ENCODE measurements at regions of chr3 and their contacts with region 1.

Region 1: DNA sequence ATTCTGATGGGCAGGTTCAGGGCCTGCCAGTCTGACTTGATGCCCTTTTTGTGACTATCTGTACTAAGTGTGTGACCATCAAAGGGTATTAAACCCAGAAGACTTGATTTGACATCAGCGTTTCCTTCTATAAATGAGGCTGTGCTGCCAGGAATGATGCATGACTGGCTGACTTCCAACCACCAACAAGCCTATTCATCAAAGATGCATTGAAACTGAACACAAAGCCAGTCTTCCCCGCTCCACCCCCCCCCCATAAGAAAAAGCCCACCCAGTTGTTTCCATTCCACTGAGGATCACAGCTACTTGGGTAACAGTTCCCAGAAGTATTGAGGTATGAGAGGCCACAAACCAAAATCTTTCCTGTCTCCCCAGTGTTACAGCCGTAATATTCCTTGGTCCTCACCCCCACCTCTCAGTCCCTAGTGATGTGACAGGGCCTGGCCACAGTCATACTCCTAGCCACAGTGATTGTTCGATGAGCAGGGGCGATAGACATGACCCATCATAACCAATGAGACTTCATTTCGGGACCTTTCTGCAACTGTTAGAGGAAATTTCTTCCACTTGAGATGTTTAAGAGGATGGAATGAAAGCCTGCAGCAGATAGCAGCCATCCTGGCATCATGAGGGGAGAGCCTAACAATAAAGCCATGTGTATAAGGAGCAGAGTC is 22.6 kb downstream of the SH3BP5 start:
- DNase-seq: no peak
- H3K4me3 Mint-ChIP-seq: peak overlapping the region; percentile 66
- H3K27ac Mint-ChIP-seq: peak overlapping the region; percentile 94
- H3K4me1 Mint-ChIP-seq: peaks cover 66% of the 10 kb centered on the region
- H3K27me3 Mint-ChIP-seq: no peaks in the 10 kb centered on the region

Region 2: DNA sequence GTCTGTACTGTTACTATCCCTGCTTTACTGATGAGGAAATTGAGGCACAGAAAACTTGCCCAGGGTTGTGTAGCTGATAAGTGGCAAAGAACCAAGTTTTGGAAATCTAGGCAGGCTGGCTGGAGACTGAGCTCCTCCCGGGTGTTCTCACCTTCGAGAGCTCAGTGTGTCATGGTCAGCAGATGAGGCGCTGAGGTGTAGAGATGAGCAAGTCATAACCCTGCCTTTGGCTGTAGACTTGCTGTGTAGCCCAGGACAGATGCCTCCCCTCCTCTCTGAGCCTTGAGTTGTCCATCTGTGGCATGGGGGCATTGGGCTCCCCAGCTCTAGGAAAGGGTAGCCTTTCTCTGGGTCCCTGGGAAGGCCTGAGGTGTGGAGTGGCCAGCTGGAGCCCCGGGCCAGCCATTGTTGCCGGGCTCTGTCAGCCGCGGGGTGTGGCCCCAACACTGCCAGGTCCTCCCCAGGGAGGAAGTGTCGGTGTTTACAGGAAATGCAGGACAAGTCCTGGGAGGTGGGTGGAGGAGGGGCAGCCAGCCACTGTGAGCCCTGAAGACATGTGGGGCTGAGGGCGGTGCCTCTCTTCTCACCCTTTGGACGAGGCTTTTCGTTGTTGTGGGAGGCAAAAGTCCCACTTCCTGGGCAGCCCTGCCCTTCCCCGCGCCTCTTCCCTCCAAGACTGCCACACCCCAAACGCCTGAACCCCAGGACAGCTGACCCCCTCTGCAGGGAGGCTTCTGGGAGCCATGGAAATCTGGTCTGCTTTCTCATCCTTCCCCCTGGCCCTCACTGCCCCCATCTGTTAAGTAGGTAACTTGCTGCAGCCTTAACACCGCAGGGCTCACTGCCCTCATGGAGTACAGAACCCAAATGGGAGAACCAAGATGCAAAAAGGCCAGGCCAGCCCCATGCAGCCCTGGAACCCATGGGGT is 461.9 kb before region 1 on chr3:
- intact Hi-C with region 1: no loop called
- DNase-seq: peak; percentile 4
- H3K4me3 Mint-ChIP-seq: no peak overlapping the region
- H3K27ac Mint-ChIP-seq: no peak overlapping the region
- H3K4me1 Mint-ChIP-seq: peaks cover 33% of the 10 kb centered on the region
- H3K27me3 Mint-ChIP-seq: no peaks in the 10 kb centered on the region

Region 3: DNA sequence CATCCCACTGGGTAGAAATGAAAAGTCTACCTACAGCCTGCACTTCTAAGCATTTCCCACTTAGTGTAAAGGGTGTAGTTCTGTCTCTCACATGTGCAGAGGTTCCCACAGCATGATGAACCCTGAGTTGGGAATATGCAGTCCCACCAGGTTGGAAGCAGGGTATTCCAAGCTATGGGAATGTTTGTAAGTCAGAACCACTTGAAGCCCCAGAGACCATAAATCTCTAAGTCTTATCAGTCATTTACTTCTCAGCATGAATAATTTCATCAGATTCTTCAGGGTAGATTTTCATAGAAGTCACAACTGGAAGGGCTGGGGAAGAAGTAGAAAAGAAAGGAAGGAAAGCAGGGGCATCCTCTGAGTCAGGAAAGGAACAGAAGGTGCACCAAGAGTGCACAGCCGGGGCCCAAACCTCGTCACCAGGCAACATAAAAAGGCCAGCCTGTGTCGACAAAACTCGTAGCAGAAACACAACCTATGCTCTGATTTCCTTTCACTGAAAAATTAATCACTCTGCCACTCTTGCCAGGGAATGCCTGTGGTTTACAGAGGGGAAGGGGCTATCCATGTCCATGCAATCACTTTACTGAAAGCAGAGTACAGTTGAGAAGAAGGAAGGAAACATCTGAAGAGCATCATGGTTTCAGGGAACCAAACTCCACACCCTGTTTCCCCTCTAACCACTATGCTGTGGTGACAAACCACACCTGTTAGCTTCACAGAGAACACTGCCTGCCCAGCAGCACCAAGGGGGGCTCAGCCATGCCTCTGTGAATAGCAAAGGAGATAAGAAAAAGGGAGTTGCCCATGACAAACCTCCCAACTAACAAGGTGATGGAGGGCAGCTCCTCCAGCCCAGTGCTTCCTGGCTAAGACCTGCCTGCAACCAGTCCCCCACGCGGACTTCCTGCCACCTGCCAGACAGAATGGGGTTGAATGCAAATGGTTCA is 17.9 kb before region 1 on chr3:
- intact Hi-C with region 1: loop called (anchors 1 kb)
- DNase-seq: peak; percentile 74
- H3K4me3 Mint-ChIP-seq: peak overlapping the region; percentile 63
- H3K27ac Mint-ChIP-seq: peak overlapping the region; percentile 78
- H3K4me1 Mint-ChIP-seq: peaks cover 89% of the 10 kb centered on the region
- H3K27me3 Mint-ChIP-seq: no peaks in the 10 kb centered on the region

Region 4: DNA sequence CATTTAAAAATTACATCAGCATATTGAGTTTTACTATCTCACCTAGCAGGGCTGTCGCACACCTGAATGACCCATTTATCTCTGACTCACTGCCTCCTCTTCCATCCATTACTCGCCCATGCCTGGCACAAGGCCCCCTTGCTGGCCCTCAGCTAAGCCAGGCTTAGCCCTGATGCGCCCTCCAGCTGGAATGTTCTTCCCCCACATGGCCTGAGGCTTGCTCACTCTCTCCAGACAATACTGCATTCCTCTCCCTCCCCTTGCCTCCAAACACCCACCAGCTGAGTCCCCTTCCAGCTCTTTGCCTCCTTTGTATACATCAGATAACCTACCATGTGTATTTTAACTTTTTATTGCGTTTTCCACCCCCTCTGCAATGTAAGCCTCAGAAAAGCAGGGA is 15.4 kb after region 1 on chr3:
- intact Hi-C with region 1: loop called (anchors 1 kb)
- DNase-seq: no peak
- H3K4me3 Mint-ChIP-seq: no peak overlapping the region
- H3K27ac Mint-ChIP-seq: no peak overlapping the region
- H3K4me1 Mint-ChIP-seq: peaks cover 80% of the 10 kb centered on the region
- H3K27me3 Mint-ChIP-seq: no peaks in the 10 kb centered on the region

Region 5: DNA sequence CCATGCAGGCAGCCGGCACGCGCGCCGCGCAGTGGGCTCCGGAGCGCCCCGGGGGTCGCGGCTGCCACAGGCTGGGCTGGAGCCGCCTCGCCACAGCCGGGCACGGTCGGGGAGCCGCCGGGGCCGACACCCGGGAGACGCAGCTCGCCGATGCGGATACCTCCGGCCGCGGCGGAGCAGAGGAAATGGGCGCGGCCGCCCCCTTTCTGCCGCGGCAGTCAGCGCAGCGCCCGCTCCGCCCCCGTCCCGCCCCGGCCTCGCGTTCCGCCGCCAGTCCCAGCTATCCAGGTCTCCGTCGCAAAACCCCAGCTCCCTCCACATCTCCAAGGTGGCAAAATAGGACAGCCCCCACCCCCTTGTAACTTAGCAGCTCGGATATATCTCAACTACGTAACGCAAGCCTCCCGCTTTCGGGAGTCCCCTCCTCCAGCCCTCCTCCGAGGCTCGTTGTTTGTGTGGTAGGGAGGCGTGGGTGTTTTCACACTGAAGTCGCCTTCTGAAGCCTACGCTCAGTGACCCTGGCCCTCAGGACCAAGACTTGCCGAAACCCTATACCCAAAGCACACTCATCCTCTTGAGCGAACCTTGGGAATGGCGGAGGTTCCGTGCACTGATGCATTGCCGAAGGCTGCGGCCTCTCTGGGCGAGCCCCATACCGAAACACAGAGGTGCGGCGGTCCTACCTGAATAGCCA is 22.8 kb after region 1 on chr3 and contains the start of gene SH3BP5:
- intact Hi-C with region 1: loop called (anchors 1 kb)
- DNase-seq: peak; percentile 73
- H3K4me3 Mint-ChIP-seq: peak within 1 kb of the TSS; percentile 94
- H3K27ac Mint-ChIP-seq: peak within 1 kb of the TSS; percentile 89
- H3K4me1 Mint-ChIP-seq: peaks cover 72% of the 10 kb centered on the region
- H3K27me3 Mint-ChIP-seq: no peaks in the 10 kb centered on the region
- total RNA-seq, gene SH3BP5: 28.0 and 30.3 TPM in 2 replicates

Region 6: GRCh38 chr3:15356186-15356585 is 46.4 kb after region 1 on chr3:
- intact Hi-C with region 1: loop called (anchors 1 kb)
- DNase-seq: no peak
- H3K4me3 Mint-ChIP-seq: no peak overlapping the region
- H3K27ac Mint-ChIP-seq: peak overlapping the region; percentile 93
- H3K4me1 Mint-ChIP-seq: peaks cover 43% of the 10 kb centered on the region
- H3K27me3 Mint-ChIP-seq: no peaks in the 10 kb centered on the region

Region 7: GRCh38 chr3:15409239-15410168 is 99.7 kb after region 1 on chr3:
- intact Hi-C with region 1: no loop called
- DNase-seq: no peak
- H3K4me3 Mint-ChIP-seq: no peak overlapping the region
- H3K27ac Mint-ChIP-seq: no peak overlapping the region
- H3K4me1 Mint-ChIP-seq: peaks cover 5% of the 10 kb centered on the region
- H3K27me3 Mint-ChIP-seq: no peaks in the 10 kb centered on the region

Region 8: DNA sequence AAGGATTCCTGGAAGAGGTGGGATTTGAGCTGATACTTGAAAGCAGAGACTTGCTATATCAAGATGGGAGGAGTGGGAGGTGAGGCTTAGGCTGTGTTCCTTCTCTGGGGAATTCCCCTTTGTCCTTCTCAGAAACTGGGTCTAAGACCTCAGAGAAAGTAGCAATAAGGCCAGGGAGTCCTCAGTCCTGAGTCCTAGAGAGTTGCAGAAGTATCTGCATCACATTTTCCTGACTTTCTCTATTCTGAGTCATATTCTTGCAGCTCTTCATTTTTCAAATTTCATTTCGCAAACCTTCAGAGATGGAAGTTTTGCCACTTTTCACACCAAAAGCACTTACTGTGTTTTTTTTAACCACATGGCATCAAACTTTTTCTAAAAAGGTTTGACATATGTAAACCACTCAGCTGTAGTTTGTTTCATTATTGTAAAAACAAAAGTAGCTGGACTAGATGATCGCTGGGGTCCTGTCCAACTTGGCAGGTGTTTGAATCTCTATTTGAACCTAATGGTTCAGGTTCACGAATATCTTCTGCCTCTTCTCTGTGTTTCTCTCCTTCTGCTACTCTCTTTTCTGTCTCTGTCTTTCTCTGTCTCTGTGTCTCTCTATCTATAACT is 190.4 kb after region 1 on chr3:
- intact Hi-C with region 1: loop called (anchors 2 kb)
- DNase-seq: no peak
- H3K4me3 Mint-ChIP-seq: no peak overlapping the region
- H3K27ac Mint-ChIP-seq: peak overlapping the region; percentile 37
- H3K4me1 Mint-ChIP-seq: peaks cover 38% of the 10 kb centered on the region
- H3K27me3 Mint-ChIP-seq: peaks cover under 1% of the 10 kb centered on the region

Region 9: DNA sequence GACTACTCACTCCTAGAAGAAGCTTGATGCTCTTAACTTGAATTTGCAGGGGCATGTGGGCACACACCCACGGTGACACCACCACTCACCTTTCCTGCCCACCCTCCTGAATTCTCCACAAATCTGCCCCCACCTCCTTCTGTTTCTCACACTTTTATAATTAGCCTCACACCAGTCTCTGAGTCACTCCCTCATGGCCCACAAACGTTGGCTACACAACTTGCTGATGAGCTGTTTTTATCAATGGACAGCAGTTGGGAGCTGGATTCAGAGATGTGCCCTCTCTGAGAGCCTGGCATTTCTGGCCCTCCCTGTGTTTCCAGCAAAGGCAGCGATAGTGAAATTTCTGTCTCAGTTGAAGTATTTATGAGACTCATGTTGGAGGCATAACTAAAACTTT is 210.4 kb after region 1 on chr3:
- intact Hi-C with region 1: no loop called
- DNase-seq: no peak
- H3K4me3 Mint-ChIP-seq: peak overlapping the region; percentile 2
- H3K27ac Mint-ChIP-seq: no peak overlapping the region
- H3K4me1 Mint-ChIP-seq: peaks cover 25% of the 10 kb centered on the region
- H3K27me3 Mint-ChIP-seq: peaks cover 8% of the 10 kb centered on the region